ENCODE measurements at regions of chrX and their contacts with region 1.

Region 1: GRCh38 chrX:12901486-12901885 is 4.9 kb upstream of the TLR8 start:
- DNase-seq: peak; percentile 89
- H3K4me3 Mint-ChIP-seq: no peak overlapping the region
- H3K27ac Mint-ChIP-seq: no peak overlapping the region
- H3K4me1 Mint-ChIP-seq: peaks cover 11% of the 10 kb centered on the region
- H3K27me3 Mint-ChIP-seq: peaks cover 1% of the 10 kb centered on the region

Region 2: DNA sequence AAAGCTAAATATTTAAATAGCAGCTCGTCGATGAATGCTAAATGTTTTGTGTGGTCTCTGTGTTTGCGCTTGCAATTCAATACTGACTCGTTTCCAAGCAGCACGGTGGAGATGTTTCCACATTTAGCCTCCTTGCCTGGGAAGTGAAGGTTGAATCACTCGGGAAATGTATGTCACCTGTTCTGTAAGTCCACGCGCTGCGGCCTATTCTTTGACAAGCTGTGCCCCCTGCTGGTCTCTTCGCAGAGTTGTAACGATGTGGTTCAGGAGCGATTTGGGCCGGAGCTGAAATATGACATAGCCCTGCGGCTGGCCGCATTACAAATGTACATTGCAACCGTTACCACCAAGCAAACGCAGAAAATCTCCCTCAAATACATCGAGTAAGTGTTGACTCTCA is 199.9 kb before region 1 on chrX:
- intact Hi-C with region 1: loop called (anchors 2 kb)
- DNase-seq: peak; percentile 71
- H3K4me3 Mint-ChIP-seq: no peak overlapping the region
- H3K27ac Mint-ChIP-seq: no peak overlapping the region
- H3K4me1 Mint-ChIP-seq: peaks cover 2% of the 10 kb centered on the region
- H3K27me3 Mint-ChIP-seq: peaks cover 20% of the 10 kb centered on the region

Region 3: DNA sequence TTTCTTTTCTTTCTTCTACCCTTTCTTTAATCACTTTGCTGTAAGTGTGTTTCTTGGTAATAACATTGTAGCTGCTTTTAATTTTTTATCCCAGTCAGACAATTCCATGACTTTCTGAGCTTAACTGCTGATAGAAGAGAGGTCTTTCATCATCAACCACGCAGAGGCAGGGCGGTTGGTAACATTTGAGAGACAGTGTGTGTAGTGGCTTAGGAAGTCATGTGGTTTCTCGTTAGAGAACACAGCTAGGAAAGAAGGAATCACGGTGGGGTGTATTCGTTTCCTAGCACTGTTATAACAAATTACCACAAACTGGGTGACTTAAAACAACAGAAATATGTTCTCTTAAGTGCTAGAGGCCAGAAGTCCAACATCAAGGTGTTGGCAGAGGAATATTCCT is 98.7 kb before region 1 on chrX:
- intact Hi-C with region 1: no loop called
- DNase-seq: peak; percentile 67
- H3K4me3 Mint-ChIP-seq: peak overlapping the region; percentile 66
- H3K27ac Mint-ChIP-seq: peak overlapping the region; percentile 90
- H3K4me1 Mint-ChIP-seq: peaks cover 28% of the 10 kb centered on the region
- H3K27me3 Mint-ChIP-seq: no peaks in the 10 kb centered on the region

Region 4: GRCh38 chrX:12814420-12814819 is 87.1 kb before region 1 on chrX:
- intact Hi-C with region 1: loop called (anchors 1 kb)
- DNase-seq: peak; percentile 86
- H3K4me3 Mint-ChIP-seq: no peak overlapping the region
- H3K27ac Mint-ChIP-seq: no peak overlapping the region
- H3K4me1 Mint-ChIP-seq: peaks cover 23% of the 10 kb centered on the region
- H3K27me3 Mint-ChIP-seq: no peaks in the 10 kb centered on the region